ENCODE measurements at regions of chr3 and their contacts with region 1.

Region 1: DNA sequence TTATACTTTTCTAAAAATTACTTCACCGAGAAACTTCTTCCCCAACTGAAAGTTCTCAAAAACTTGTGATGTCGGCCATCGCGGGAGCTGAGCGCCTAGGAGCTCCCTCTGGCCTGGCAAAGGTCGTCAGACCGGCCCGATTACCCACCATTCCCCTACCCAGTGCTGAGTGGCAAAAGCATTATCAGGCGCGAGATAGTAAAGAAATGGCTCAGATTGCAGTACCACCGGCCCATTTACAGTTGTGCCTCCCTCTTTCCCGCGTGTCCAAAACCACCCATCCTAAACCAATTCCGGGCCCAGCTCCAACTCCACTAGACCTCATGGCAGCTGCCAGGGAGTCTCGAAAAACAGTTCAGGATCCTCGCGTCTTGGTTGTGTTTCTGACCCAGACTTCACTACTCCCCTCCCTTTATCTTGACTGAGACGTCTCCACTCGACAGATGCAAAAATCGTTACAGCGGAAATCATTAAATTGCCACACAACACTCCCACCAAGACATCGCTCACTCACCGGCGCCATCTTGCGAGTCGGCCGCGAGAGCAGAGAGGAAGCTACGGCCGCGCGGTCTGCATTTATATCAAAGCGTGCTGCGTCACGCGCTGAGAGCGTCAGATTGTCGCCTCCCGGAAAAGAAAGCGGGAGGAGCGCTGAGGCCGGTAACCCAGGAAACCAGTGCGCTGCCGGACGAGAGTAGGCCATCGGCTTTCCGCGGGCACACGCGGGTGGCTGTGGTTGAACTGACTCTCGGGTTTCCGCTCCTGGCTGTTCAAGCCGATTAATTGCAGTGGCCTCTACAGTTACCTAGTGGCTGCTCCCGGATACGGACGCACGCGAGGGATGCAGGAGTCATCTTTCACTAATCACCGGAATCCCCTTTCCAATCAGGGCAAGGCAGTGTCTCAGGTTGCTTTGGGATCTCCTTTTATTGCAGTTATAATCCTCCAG is at the start of gene RPL22L1:
- DNase-seq: peak; percentile 92 to 94
- H3K4me3 ChIP-seq: peak within 1 kb of the TSS; percentile 80
- H3K4me3 Mint-ChIP-seq: peak within 1 kb of the TSS; percentile 100
- H3K27ac Mint-ChIP-seq: peak within 1 kb of the TSS; percentile 100
- H3K4me1 ChIP-seq: peaks cover 11% of the 10 kb centered on the region; the same call in 1 of the 2 replicates
- H3K4me1 Mint-ChIP-seq: peaks cover 8% of the 10 kb centered on the region
- H3K27me3 ChIP-seq: no peaks in the 10 kb centered on the region
- H3K27me3 Mint-ChIP-seq: no peaks in the 10 kb centered on the region
- CTCF ChIP-seq: peak in 1 of 2 experiments; percentile 3
- total RNA-seq, gene RPL22L1: 31.1 and 37.7 TPM in 2 replicates

Region 2: DNA sequence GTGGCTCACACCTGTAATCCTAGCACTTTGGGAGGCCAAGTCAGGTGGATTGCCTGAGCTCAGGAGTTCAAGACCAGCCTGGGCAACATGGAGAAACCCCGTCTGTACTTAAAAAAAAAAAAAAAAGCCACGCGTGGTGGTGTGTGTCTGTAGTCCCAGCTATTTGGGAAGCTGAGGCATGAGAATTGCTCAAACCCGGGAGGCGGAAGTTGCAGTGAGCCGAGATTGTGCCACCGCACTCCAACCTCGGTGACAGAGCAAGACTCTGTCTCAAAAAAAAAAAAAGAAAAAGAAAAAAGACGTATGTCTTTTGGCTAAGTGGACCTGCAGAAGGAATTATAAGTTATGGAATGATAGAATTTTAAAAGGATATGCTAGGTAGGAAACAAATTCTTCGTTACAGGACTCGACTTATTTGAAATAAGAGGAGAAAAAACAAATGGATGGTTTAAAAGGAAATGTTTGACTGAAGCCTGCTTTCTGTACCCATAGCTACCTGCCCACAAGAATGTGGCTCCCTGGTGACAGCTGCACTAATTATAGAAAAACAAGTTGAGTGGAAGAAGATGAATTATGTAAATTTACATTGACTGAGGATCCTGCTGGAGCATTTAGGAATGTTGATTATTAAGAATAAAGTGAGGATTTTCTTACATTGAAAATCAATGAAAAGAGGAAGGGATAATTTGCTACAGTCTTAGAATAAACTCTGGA is 548.4 kb before region 1 on chr3:
- CTCF ChIA-PET with region 1: no interaction called
- POLR2A ChIA-PET with region 1: interaction called, 12 read pairs
- intact Hi-C with region 1: no loop called
- DNase-seq: no peak
- H3K4me3 ChIP-seq: no peak overlapping the region
- H3K4me3 Mint-ChIP-seq: no peak overlapping the region
- H3K27ac Mint-ChIP-seq: no peak overlapping the region
- H3K4me1 ChIP-seq: peaks cover 12% of the 10 kb centered on the region
- H3K4me1 Mint-ChIP-seq: peaks cover 6% of the 10 kb centered on the region
- H3K27me3 ChIP-seq: no peaks in the 10 kb centered on the region
- H3K27me3 Mint-ChIP-seq: no peaks in the 10 kb centered on the region
- CTCF ChIP-seq: no peak

Region 3: GRCh38 chr3:170908235-170909116 is 38.6 kb after region 1 on chr3 and contains the start of gene EIF5A2:
- CTCF ChIA-PET with region 1: no interaction called
- POLR2A ChIA-PET with region 1: interaction called, 36 read pairs
- intact Hi-C with region 1: loop called (anchors 1 kb)
- DNase-seq: peak; percentile 97 to 99
- H3K4me3 ChIP-seq: peak within 1 kb of the TSS; percentile 84
- H3K4me3 Mint-ChIP-seq: peak within 1 kb of the TSS; percentile 90
- H3K27ac Mint-ChIP-seq: peak within 1 kb of the TSS; percentile 75
- H3K4me1 ChIP-seq: no peaks in the 10 kb centered on the region
- H3K4me1 Mint-ChIP-seq: no peaks in the 10 kb centered on the region
- H3K27me3 ChIP-seq: no peaks in the 10 kb centered on the region
- H3K27me3 Mint-ChIP-seq: no peaks in the 10 kb centered on the region
- CTCF ChIP-seq: no peak
- total RNA-seq, gene EIF5A2: 16.1 and 16.6 TPM in 2 replicates

Measured in Caco-2 (cell line).